ENCODE measurements at regions of chr21 and their contacts with region 1.

Region 1: DNA sequence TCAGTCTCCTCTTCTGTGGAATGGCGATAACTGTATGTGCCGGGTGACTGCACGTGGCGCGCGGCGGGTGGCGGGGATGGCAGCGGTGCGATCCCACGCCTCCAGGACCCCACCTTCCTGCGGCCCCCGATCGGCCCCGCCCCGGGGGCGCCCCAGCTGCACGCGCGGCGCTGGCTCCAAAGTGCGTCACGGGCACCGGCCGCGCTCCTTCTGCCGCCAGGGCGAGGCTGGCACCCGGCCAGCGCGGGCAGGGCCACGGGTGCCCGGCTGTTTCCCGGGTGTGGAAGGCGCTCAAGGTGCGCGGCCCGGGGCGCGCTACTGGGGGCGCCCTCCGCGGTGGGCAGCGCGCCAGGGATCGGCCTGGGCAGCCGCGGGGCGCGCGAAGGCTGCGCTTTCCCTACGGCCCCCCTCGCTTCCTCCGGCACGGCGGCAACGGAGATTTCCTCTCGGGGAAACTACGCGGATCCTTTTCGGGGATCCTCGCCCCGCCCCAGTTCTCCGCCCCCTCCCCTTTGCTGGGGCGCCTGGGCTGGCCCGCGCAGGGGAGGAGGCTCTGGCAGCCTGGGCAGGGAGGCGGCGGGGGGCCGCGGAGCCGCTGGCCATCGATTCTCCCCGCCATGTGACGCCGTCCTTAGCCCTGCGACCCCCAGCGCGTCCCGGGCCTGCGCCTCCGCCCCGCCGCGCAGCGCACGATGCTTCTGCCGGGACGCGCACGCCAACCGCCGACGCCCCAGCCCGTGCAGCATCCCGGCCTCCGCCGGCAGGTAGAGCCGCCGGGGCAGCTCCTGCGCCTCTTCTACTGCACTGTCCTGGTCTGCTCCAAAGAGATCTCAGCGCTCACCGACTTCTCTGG is at the start of gene EVA1C:
- DNase-seq: peak; percentile 84
- ATAC-seq: peak; percentile 68
- total RNA-seq, gene EVA1C: 12.8 TPM

Region 2: DNA sequence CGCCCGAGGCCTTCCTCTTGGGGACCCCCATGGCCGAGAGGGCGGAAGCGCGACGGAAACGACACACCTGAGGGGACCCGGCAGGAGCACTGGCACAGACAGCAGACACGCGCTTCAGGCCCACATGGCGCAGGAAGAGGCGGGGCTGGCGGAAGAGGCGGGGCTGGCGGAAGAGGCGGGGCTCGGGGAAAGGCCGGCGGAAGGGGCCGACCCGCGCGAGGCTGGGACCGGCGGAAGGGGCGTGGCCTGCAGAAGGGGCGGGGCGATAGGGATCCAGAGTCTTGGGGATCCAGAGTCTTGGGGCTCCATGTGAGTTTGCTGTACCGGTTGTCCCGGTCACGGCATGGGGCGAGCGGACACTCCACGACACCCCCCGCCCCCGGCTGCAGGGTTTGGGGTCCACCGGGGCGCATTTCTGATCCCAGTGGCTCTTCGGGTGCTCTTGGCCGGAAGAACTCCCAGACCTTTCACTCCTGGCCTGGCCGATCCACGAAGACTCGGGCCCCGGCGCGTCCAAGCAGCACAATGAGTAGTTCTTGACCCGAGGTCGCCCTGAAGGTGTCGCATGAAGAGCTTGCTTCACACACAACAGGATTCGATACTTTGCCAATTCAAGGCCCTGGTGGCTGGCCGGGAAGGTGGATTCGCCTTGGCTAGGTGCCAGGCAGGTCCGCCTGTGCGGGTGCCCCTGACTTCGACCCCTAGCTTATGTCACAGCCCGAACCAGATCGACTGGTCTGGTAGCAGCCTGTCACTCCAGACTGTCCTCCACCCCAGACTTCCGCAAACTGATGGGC is 19.3 kb before region 1 on chr21 and contains the start of gene URB1:
- intact Hi-C with region 1: loop called (anchors 1 kb)
- DNase-seq: peak; percentile 95
- ATAC-seq: peak; percentile 98
- total RNA-seq, gene URB1: 11.6 TPM

Region 3: GRCh38 chr21:32457360-32457840 is 45.0 kb after region 1 on chr21:
- intact Hi-C with region 1: loop called (anchors 2 kb)
- DNase-seq: no peak
- ATAC-seq: no peak

Region 4: GRCh38 chr21:32508558-32508957 is 96.2 kb after region 1 on chr21:
- intact Hi-C with region 1: no loop called
- DNase-seq: no peak
- ATAC-seq: no peak

Region 5: DNA sequence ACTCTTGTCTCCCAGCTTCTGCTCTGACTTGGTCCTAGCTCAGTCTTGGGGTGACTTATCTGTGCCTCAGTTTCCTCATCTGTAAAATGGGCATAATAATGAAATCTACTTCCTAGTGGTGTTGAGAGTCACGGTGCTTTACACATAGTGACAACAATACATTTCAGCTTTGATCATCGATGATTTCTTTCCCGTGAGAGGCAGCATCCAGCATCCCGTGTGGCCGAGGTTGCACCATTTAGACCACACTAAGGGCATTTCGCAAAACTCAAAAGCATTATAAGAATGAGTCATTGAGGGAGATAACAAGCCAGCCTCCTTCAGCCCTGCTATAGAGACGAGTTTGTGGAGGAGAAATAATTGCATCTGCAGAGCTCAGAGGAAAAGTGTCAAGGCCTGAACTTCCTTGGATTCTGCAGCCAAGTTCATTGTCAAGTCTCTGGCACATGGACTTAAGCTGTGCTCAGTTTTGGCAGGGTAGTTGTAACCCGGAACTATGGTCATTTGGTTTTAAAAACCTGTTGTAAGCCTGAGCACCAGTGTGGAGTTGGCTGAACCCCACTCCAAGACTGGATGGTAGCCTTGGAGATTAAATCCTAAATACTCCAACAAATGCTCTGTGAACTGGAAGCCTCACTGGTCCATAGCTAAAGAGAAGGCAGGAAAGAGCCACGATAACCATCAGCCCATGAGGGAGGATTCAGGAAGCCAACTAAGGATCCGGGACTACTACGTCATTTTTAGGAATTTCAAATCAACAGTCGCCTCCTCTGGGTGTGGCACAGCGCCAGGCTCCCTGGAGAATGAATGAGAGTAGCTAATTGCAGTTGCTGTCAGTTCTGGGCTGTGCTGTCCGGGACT is 108.7 kb after region 1 on chr21:
- intact Hi-C with region 1: loop called (anchors 2 kb)
- DNase-seq: peak; percentile 94
- ATAC-seq: peak; percentile 78

Region 6: GRCh38 chr21:32612075-32612998 is 199.9 kb after region 1 on chr21 and contains the start of gene CFAP298:
- intact Hi-C with region 1: loop called (anchors 5 kb)
- DNase-seq: peak; percentile 91
- ATAC-seq: peak; percentile 96
- total RNA-seq, gene CFAP298: 18.4 TPM